AG04449 (cell line): ENCODE measurements at regions of chr9 and their contacts with region 1.

Region 1: GRCh38 chr9:122940603-122941559 is at the start of gene RABGAP1:
- DNase-seq: peak; percentile 87
- H3K4me3 ChIP-seq: peak within 1 kb of the TSS; percentile 85
- CTCF ChIP-seq: no peak

Region 2: DNA sequence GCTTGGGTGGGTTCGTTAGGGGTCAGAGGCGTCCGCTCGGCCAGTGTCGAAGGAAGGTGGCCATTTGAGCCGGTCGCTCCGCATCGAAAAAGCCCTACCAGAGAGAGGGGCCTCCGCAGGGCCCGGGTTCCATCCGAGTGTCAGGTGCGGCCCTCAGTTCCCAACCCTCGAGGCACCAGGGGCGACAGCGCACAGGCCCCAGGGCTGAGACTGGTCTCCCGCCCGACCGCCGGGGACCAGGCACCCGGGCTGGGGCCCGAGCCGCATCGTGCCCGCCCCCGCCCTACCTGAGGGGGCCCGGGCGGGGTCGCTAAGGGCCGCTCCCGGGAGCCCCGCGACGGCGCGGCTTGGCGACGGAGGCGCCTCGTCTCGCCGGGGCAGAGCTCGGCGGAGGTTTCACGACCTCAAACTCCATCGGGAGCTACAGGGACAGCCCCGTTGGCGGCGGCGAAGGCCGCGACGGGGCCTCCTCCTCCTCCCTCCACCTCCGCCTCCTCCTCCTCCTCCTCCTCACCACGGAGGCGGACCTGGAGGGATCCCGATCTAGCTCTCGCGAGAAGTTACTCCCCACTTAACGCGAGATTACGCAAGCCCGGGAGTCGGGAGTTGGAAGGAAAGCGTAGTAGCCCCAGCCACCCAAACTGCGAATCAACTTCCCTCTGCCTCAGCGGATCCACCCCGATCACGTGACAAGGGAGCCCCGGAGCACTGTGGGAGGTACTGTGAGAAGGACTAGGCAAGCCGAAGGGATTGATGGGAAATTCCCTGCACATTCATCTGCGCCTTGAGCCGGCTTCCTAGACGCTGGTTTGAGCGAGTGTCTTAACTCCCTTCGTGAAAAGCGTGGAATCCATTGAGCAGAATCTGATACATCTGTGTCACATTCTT is 35.8 kb before region 1 on chr9 and contains the start of gene RC3H2:
- CTCF ChIA-PET with region 1: no interaction called
- POLR2A ChIA-PET with region 1: interaction called, 10 read pairs
- DNase-seq: peak; percentile 99
- H3K4me3 ChIP-seq: peak within 1 kb of the TSS; percentile 78
- CTCF ChIP-seq: no peak

Region 3: GRCh38 chr9:122912964-122913673 is 27.8 kb before region 1 on chr9 and contains the start of gene ZBTB6:
- CTCF ChIA-PET with region 1: no interaction called
- POLR2A ChIA-PET with region 1: interaction called, 11 read pairs
- DNase-seq: peak; percentile 16
- H3K4me3 ChIP-seq: peak within 1 kb of the TSS; percentile 85
- CTCF ChIP-seq: no peak

Region 4: DNA sequence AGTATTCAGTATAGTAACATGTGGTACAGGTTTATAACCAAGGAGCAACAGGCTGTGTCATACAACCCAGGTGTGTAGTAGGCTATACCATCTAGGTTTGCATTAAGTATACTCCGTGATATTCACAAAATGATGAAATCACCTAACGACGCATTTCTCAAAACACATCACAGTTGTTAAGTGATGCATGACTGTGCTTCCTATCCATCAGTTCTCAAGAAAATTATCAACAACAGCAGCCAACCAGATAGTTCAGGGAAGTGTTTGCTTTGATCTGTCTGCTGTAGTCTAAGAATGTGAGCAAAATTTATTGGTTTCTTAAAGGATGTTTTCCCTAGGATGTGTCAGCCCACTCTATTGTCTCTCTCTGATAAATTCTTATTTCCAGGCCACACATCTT is 16.9 kb before region 1 on chr9:
- CTCF ChIA-PET with region 1: no interaction called
- POLR2A ChIA-PET with region 1: no interaction called
- DNase-seq: no peak
- H3K4me3 ChIP-seq: no peak overlapping the region
- CTCF ChIP-seq: no peak

Region 5: DNA sequence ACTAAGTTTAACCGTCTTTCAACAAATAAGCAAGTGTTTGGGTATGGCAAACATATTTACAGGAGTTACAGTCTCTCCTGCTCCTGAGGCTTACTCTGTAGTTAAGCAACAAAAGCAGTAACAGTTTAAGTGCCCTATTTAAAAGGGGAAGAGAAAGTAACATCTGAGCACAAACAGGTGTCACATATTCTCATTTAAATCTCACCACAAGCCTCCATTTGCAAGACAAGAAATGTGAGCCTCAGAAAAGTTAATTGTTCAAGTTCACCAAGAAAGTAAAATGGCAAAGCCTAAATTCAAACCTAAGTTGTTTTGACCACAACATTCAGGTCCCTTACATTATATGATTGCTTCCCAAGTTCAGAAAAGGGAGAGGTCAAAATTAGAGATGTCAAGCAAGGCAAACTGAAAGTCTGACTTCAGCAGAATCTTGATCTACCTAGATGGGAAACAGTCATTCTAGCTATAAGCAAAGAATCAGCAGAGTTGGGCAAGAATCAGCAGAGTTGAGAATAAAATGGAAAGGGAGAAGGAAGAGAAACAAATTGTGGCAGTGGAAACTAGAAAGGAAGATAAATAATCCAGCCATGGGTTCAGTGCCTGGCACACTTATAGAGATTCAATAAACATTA is 234.1 kb after region 1 on chr9:
- CTCF ChIA-PET with region 1: no interaction called
- POLR2A ChIA-PET with region 1: no interaction called
- DNase-seq: no peak
- H3K4me3 ChIP-seq: no peak overlapping the region
- CTCF ChIP-seq: no peak